ENCODE measurements at regions of chr12 and their contacts with region 1.

Region 1: GRCh38 chr12:56645717-56646446 is at the start of gene ATP5F1B:
- DNase-seq: peak; percentile 97
- H3K4me3 Mint-ChIP-seq: peak within 1 kb of the TSS; percentile 96
- H3K27ac Mint-ChIP-seq: peak within 1 kb of the TSS; percentile 93
- H3K4me1 Mint-ChIP-seq: peaks cover 33% of the 10 kb centered on the region
- H3K27me3 Mint-ChIP-seq: no peaks in the 10 kb centered on the region
- total RNA-seq, gene ATP5F1B: 854 to 863 TPM

Region 2: DNA sequence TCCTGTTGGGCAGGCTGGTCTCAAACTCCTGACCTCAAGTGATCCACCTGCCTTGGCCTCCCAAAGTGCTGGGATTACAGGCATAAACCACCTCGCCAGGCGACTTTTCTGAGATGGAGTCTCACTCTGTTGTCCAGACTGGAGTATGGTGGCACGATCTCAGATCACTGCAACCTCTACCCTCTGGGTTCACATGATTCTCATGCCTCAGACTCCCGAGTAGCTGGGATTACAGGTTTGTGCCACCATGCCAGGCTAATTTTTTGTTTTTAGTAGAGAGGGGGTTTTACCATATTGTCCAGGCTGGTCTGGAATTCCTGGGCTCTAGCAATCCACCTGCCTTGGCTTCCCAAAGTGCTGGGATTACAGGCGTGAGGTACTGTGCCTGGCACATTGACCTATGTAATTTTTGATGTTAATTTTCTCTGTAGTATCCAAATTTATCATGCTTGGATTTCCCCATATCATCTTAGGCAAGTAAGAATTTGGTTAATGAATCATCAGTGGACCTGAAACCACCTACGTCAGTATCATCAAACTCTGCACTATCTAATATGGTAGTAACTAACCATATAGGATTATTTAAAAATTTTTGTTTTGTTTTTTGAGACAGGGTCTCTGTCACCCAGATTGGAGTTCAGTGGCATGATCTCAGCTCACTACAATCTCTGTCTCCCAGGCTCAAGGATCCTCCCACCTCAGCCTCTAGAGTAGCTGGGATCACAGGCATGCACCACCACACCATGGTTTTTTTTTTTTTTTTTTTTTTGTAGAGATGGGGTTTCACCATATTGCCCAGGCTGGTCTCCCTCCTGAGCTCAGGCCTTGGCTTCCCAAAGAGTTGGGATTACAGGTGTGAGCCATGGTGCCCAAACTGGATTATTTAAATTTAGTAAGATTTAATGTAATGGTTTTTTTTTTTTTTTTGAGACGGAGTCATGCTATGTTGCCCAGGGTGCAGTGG is 11.8 kb after region 1 on chr12:
- CTCF ChIA-PET with region 1: no interaction called
- intact Hi-C with region 1: loop called (anchors 1 kb)
- DNase-seq: no peak
- H3K4me3 Mint-ChIP-seq: no peak overlapping the region
- H3K27ac Mint-ChIP-seq: peak overlapping the region; percentile 73
- H3K4me1 Mint-ChIP-seq: peaks cover 18% of the 10 kb centered on the region
- H3K27me3 Mint-ChIP-seq: no peaks in the 10 kb centered on the region

Region 3: GRCh38 chr12:56724972-56725722 is 79.3 kb after region 1 on chr12 and contains the start of gene NACA:
- CTCF ChIA-PET with region 1: no interaction called
- intact Hi-C with region 1: loop called (anchors 1 kb)
- DNase-seq: peak; percentile 99
- H3K4me3 Mint-ChIP-seq: peak within 1 kb of the TSS; percentile 99
- H3K27ac Mint-ChIP-seq: peak within 1 kb of the TSS; percentile 99
- H3K4me1 Mint-ChIP-seq: peaks cover 46% of the 10 kb centered on the region
- H3K27me3 Mint-ChIP-seq: no peaks in the 10 kb centered on the region
- total RNA-seq, gene NACA: 1,279 to 1,321 TPM

Region 4: DNA sequence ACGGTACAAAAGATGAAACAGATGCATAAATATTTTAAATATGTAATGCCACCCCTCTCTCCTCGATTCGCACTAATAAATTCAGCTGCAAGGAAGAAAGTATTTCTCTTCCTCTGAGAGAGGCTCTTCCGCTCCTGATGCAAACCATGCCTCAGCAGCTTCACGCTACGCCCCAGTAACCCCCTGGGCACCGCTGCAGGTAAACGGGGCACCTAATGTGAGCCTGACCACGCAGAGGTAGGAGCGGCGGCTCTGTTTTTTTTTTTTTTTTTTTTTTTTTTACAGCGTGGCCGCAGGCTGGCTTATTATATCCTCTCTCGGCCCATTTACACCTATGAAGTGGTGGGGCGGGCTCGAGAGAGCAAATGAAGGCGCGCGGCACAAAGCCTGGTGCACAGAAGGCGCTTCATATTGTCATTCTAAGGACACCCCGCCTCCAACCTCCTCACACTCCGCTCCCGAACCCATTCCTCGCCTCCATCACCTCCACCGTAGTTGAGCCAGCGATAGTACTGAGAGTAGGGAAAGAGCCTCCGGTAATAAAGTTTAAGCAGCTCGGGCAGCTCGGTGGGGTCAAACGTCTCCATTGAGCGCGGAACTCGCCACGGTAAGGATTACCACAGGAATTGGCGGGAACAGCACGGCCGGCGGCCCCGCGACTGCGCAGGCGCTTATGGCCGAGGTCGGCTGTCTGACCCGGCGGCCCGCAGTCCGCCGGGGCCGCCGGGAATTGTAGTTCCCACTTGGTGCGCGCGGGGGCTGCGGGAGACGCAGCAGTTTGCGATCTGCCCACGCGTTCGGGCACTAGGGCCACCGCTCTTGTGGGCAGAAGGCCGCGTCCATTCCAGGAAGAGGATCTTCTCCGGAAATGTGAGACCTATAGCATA is 106.1 kb after region 1 on chr12 and contains the start of gene PRIM1:
- CTCF ChIA-PET with region 1: interaction called, 4 read pairs
- intact Hi-C with region 1: loop called (anchors 1 kb)
- DNase-seq: peak; percentile 90
- H3K4me3 Mint-ChIP-seq: peak within 1 kb of the TSS; percentile 98
- H3K27ac Mint-ChIP-seq: peak within 1 kb of the TSS; percentile 99
- H3K4me1 Mint-ChIP-seq: peaks cover 40% of the 10 kb centered on the region
- H3K27me3 Mint-ChIP-seq: no peaks in the 10 kb centered on the region
- total RNA-seq, gene PRIM1: 74.9 to 75.0 TPM

Region 5: GRCh38 chr12:57078519-57079404 is 432.9 kb after region 1 on chr12 and contains the start of gene NEMP1:
- CTCF ChIA-PET with region 1: no interaction called
- intact Hi-C with region 1: loop called (anchors 1 kb)
- DNase-seq: peak; percentile 98
- H3K4me3 Mint-ChIP-seq: peak within 1 kb of the TSS; percentile 99
- H3K27ac Mint-ChIP-seq: peak within 1 kb of the TSS; percentile 98
- H3K4me1 Mint-ChIP-seq: peaks cover 37% of the 10 kb centered on the region
- H3K27me3 Mint-ChIP-seq: no peaks in the 10 kb centered on the region
- total RNA-seq, gene NEMP1: 71.3 to 72.2 TPM